PC-3 (cell line): ENCODE measurements at regions of chr1 and their contacts with region 1.

Region 1: GRCh38 chr1:8097077-8097799 is 71.1 kb upstream of the ERRFI1 start:
- DNase-seq: peak; percentile 98
- ATAC-seq: peak; percentile 84
- H3K4me3 ChIP-seq: peak overlapping the region; percentile 27; the same call in 1 of the 2 replicates
- H3K27ac ChIP-seq: peak overlapping the region; percentile 98
- H3K4me1 ChIP-seq: peaks cover 50% of the 10 kb centered on the region
- H3K27me3 ChIP-seq: no peaks in the 10 kb centered on the region
- CTCF ChIP-seq: no peak

Region 2: DNA sequence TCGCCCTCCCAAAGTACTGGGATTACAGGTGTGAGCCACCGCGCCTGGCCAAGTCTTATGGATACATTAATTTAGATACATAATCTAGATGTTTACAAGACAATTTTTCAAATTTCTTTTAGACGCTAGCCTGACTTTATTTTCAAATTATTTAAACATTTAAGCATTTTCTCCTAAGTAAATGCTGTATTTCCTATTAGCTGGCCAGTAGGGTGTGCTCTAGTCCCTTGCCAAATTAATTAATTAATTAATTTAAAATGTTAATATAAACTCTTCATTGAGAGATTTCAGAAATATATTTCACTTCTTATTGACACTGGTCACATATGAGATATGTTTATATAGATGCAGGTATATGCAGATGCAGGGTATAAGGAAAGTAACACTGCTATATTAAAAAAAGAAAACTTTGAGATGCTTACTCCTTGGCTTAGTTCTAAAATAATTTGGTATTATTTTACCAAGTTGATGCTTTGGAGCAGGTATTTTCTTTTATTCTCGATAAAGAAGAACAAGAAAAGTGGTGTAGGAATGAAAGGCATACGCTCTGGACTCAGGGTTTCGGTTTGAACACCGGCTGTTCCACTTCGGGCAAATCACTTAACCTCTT is 66.0 kb before region 1 on chr1:
- CTCF ChIA-PET with region 1: no interaction called
- POLR2A ChIA-PET with region 1: interaction called, 5 read pairs
- intact Hi-C with region 1: loop called (anchors 1 kb)
- DNase-seq: peak; percentile 76
- ATAC-seq: no peak
- H3K4me3 ChIP-seq: no peak overlapping the region
- H3K27ac ChIP-seq: peak overlapping the region; percentile 70
- H3K4me1 ChIP-seq: peaks cover 36% of the 10 kb centered on the region
- H3K27me3 ChIP-seq: no peaks in the 10 kb centered on the region
- CTCF ChIP-seq: peak; percentile 61

Region 3: DNA sequence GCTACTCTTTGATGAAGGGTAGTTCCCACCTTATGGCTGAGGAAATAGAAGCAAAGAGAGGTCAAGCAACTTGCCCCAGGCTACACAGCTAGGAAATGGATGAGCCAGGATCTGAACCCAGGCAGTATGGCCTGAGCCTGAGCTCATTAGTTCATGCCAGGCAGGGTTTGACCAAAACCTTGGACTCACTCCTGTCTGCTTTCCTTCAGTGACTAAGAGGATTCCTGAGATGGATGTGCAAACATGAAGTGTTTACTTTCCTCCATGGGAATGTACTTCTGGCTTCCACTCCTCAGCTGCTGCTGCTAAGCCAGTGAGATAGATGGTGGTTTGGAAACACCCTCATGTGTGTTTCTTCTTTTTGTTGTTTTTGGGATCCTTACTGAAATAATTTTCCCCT is 36.0 kb before region 1 on chr1:
- CTCF ChIA-PET with region 1: no interaction called
- POLR2A ChIA-PET with region 1: interaction called, 3 read pairs
- intact Hi-C with region 1: loop called (anchors 2 kb)
- DNase-seq: peak; percentile 95
- ATAC-seq: peak; percentile 92
- H3K4me3 ChIP-seq: peak overlapping the region; percentile 57
- H3K27ac ChIP-seq: peak overlapping the region; percentile 99
- H3K4me1 ChIP-seq: peaks cover 41% of the 10 kb centered on the region
- H3K27me3 ChIP-seq: no peaks in the 10 kb centered on the region
- CTCF ChIP-seq: no peak

Region 4: DNA sequence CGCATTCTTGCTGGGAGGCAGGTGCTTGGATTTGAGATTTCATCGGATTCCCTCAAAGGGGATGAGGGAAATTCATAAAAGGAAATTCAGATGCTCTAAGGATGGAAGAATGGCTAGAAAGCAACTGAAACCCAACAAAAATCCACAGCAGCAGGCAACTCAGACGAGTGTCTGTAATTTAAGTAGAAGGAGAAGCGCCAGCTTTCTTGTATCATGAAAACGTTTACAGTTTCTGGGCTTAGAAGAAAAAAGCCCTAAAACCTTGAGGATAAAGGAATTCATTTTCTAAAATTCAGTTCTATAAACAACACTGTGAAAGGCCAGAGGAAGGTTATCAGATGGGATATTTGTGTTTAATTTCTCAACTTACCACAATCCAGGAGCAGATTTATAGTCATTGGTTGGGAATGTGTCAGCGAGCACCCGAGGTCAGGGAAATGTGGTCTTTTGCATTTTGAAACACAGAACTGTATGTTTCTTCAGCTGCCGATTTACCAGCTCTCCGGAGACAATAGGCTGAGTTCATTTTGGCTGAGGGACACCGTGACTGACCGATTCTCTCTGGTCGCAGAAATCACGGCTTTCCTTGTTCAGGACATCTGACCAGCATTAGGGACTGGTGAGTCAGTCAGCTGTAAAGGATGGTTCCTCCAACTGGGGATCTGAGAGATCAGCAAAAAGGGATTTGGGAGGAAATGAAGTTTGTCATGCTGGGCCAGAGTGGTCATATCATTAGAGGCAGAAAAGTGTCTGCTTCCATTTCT is 40.4 kb after region 1 on chr1:
- CTCF ChIA-PET with region 1: no interaction called
- POLR2A ChIA-PET with region 1: no interaction called
- intact Hi-C with region 1: loop called (anchors 5 kb)
- DNase-seq: peak; percentile 78
- ATAC-seq: peak; percentile 68
- H3K4me3 ChIP-seq: peak overlapping the region; percentile 36; the same call in 1 of the 2 replicates
- H3K27ac ChIP-seq: peak overlapping the region; percentile 69
- H3K4me1 ChIP-seq: peaks cover 35% of the 10 kb centered on the region
- H3K27me3 ChIP-seq: no peaks in the 10 kb centered on the region
- CTCF ChIP-seq: no peak

Region 5: DNA sequence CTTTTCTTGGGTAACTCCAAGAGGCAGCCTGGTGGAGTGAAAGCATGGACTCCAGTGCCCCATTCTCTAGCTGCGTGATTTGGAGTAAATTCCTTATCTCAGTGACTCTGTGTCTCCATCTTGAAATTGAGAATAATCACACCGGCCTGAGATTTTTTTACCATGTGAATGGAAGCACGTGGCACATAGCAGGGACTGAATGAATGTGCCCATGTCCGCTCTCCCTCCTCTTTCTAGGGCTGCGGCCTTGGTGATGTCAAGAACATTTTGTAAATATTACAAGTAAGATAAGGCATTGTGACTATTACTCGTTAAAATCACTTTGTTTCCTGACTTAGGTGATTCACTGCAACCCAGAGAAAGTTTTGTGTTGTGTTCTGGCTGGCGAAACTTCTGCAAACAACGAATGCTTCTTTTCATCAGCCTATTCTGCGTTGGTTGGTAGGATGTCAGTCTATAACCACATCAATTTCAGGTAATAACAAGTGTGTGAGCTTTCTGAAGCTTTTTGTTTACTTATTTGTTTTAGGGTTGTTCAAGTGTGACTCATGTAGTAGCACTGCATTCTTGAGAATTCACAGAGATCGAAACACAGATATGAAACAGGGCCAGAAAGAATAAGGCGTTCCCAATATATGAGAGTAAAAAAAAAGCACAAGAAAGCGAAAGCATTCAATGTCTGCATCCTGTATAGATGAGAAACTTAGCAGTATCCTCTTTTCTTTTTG is 85.0 kb after region 1 on chr1:
- CTCF ChIA-PET with region 1: no interaction called
- POLR2A ChIA-PET with region 1: interaction called, 3 read pairs
- intact Hi-C with region 1: loop called (anchors 1 kb)
- DNase-seq: peak; percentile 98
- ATAC-seq: peak; percentile 90
- H3K4me3 ChIP-seq: no peak overlapping the region
- H3K27ac ChIP-seq: peak overlapping the region; percentile 99
- H3K4me1 ChIP-seq: peaks cover 27% of the 10 kb centered on the region
- H3K27me3 ChIP-seq: no peaks in the 10 kb centered on the region
- CTCF ChIP-seq: no peak

Region 6: GRCh38 chr1:8203056-8203455 is 105.8 kb after region 1 on chr1:
- CTCF ChIA-PET with region 1: no interaction called
- POLR2A ChIA-PET with region 1: interaction called, 10 read pairs
- intact Hi-C with region 1: loop called (anchors 1 kb)
- DNase-seq: no peak
- ATAC-seq: no peak
- H3K4me3 ChIP-seq: no peak overlapping the region
- H3K27ac ChIP-seq: peak overlapping the region; percentile 98
- H3K4me1 ChIP-seq: peaks cover 53% of the 10 kb centered on the region
- H3K27me3 ChIP-seq: no peaks in the 10 kb centered on the region
- CTCF ChIP-seq: no peak

Region 7: GRCh38 chr1:8259498-8260290 is 162.5 kb after region 1 on chr1:
- CTCF ChIA-PET with region 1: no interaction called
- POLR2A ChIA-PET with region 1: no interaction called
- intact Hi-C with region 1: loop called (anchors 1 kb)
- DNase-seq: peak; percentile 86
- ATAC-seq: peak; percentile 42
- H3K4me3 ChIP-seq: peak overlapping the region; percentile 56
- H3K27ac ChIP-seq: peak overlapping the region; percentile 97
- H3K4me1 ChIP-seq: peaks cover 30% of the 10 kb centered on the region
- H3K27me3 ChIP-seq: no peaks in the 10 kb centered on the region
- CTCF ChIP-seq: no peak